B cell (primary cell): ENCODE measurements at regions of chr2 and their contacts with region 1.

Region 1: GRCh38 chr2:33583194-33583938 is 15.7 kb downstream of the FAM98A start:
- DNase-seq: peak; percentile 75
- ATAC-seq: peak; percentile 69
- H3K4me3 ChIP-seq: peak overlapping the region in 1 of 5 experiments; percentile 2
- H3K4me3 Mint-ChIP-seq: no peak overlapping the region
- H3K27ac ChIP-seq: peak overlapping the region; percentile 31 to 81
- H3K27ac Mint-ChIP-seq: peak overlapping the region; percentile 72
- H3K4me1 ChIP-seq: peaks cover 9 to 22% of the 10 kb centered on the region in 2 donors
- H3K4me1 Mint-ChIP-seq: peaks cover 17% of the 10 kb centered on the region
- H3K27me3 ChIP-seq: no peaks in the 10 kb centered on the region
- H3K27me3 Mint-ChIP-seq: no peaks in the 10 kb centered on the region
- CTCF ChIP-seq: peak; percentile 98

Region 2: GRCh38 chr2:32553829-32554432 is 1029.4 kb before region 1 on chr2:
- CTCF ChIA-PET with region 1: interaction called, 7 read pairs
- POLR2A ChIA-PET with region 1: no interaction called
- intact Hi-C with region 1: loop called (anchors 1 kb)
- DNase-seq: peak; percentile 68
- ATAC-seq: peak; percentile 68
- H3K4me3 ChIP-seq: no peak overlapping the region
- H3K4me3 Mint-ChIP-seq: no peak overlapping the region
- H3K27ac ChIP-seq: peak overlapping the region in 1 of 2 donors; percentile 57
- H3K27ac Mint-ChIP-seq: no peak overlapping the region
- H3K4me1 ChIP-seq: no peaks in the 10 kb centered on the region
- H3K4me1 Mint-ChIP-seq: peaks cover 4% of the 10 kb centered on the region
- H3K27me3 ChIP-seq: no peaks in the 10 kb centered on the region
- H3K27me3 Mint-ChIP-seq: no peaks in the 10 kb centered on the region
- CTCF ChIP-seq: peak; percentile 87

Region 3: DNA sequence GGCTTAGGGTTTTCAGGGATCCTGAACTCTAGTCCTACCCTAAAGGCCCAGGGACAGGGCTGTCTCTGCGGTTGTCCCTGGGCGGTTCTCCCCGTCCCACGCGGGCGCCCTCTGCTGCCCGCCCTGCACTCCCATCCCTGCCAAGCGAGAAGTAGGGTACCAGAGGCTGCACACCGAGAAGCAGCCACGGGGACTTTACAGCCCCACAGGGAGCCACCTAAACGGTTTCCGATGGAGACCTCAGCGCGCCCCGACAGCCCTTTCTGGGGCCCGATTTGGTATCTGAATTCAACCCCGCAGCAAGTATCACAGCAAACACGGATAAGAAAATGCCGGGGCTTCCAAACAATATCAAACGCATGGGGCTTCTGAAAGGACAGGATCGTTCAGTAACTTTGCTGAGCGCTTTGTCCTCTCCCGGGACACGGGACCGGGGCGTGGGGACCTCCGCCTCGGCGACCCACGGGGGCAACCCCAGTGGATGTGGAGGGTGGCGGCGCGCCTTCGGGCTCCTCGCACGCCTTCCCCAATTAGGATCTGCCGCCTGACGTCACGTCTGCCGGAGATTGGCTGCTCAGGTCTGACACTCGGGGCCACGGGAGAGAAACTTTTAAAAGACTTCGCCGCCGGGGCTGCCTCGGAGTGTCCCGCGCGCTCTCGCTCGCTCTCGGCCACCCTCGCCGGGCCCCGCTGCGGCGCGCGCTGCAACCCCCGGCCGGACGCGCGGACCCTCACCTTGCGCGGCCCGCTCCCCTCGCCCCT is 636.9 kb before region 1 on chr2 and contains the start of gene LTBP1:
- CTCF ChIA-PET with region 1: interaction called, 5 read pairs
- POLR2A ChIA-PET with region 1: no interaction called
- intact Hi-C with region 1: loop called (anchors 5 kb)
- DNase-seq: peak; percentile 68
- ATAC-seq: peak; percentile 75
- H3K4me3 ChIP-seq: peak within 1 kb of the TSS; percentile 42 to 72 (median 62)
- H3K4me3 Mint-ChIP-seq: peak within 1 kb of the TSS; percentile 86
- H3K27ac ChIP-seq: no peak within 1 kb of the TSS
- H3K27ac Mint-ChIP-seq: peak within 1 kb of the TSS; percentile 4
- H3K4me1 ChIP-seq: peaks cover 7 to 12% of the 10 kb centered on the region in 2 donors
- H3K4me1 Mint-ChIP-seq: peaks cover 15% of the 10 kb centered on the region
- H3K27me3 ChIP-seq: peaks cover 0 to 21% (median 13%) of the 10 kb centered on the region in 4 experiments
- H3K27me3 Mint-ChIP-seq: peaks cover 27% of the 10 kb centered on the region
- CTCF ChIP-seq: peak; percentile 67
- total RNA-seq, gene LTBP1: 0.17 and 0.69 TPM in 2 replicates

Region 4: DNA sequence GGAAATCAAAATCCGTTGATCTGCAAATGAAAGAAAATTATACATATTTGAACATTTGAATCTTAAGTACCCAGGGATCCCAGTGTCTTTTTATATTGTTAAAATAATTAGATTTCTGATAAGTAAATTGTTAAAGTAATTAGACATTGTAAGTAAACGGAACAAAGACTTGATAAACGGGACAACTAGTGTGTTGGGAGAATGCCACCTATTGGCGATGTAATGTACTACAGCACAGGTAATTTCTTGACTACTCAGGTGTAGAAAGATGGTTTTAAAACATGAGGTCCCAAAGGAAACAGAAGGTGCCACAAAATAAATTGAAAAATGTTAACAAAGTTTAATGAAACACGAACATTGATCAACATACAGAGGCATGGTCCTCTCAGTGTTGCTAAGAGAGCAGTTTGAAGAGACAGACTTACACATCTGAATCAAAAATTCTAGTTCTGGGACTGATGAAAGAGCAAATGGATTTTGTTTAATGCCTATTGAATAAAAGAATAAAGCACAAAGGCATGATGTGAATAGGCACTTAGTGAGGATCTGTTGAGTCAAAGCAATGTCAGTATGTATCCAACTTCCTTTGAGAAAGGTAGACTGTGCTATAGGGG is 210.3 kb before region 1 on chr2:
- CTCF ChIA-PET with region 1: interaction called, 8 read pairs
- POLR2A ChIA-PET with region 1: no interaction called
- intact Hi-C with region 1: loop called (anchors 1 kb)
- DNase-seq: peak; percentile 70
- ATAC-seq: peak; percentile 57
- H3K4me3 ChIP-seq: no peak overlapping the region
- H3K4me3 Mint-ChIP-seq: no peak overlapping the region
- H3K27ac ChIP-seq: no peak overlapping the region
- H3K27ac Mint-ChIP-seq: no peak overlapping the region
- H3K4me1 ChIP-seq: no peaks in the 10 kb centered on the region
- H3K4me1 Mint-ChIP-seq: no peaks in the 10 kb centered on the region
- H3K27me3 ChIP-seq: no peaks in the 10 kb centered on the region
- H3K27me3 Mint-ChIP-seq: no peaks in the 10 kb centered on the region
- CTCF ChIP-seq: peak; percentile 97

Region 5: GRCh38 chr2:33529771-33530351 is 53.5 kb before region 1 on chr2:
- CTCF ChIA-PET with region 1: interaction called, 5 read pairs
- POLR2A ChIA-PET with region 1: interaction called, 7 read pairs
- intact Hi-C with region 1: loop called (anchors 5 kb)
- DNase-seq: peak; percentile 36
- ATAC-seq: peak; percentile 37
- H3K4me3 ChIP-seq: peak overlapping the region in 1 of 5 experiments; percentile 56
- H3K4me3 Mint-ChIP-seq: peak overlapping the region; percentile 72
- H3K27ac ChIP-seq: peak overlapping the region; percentile 98 to 99
- H3K27ac Mint-ChIP-seq: peak overlapping the region; percentile 95
- H3K4me1 ChIP-seq: peaks cover 72 to 77% of the 10 kb centered on the region in 2 donors
- H3K4me1 Mint-ChIP-seq: peaks cover 79% of the 10 kb centered on the region
- H3K27me3 ChIP-seq: no peaks in the 10 kb centered on the region
- H3K27me3 Mint-ChIP-seq: no peaks in the 10 kb centered on the region
- CTCF ChIP-seq: no peak

Region 6: DNA sequence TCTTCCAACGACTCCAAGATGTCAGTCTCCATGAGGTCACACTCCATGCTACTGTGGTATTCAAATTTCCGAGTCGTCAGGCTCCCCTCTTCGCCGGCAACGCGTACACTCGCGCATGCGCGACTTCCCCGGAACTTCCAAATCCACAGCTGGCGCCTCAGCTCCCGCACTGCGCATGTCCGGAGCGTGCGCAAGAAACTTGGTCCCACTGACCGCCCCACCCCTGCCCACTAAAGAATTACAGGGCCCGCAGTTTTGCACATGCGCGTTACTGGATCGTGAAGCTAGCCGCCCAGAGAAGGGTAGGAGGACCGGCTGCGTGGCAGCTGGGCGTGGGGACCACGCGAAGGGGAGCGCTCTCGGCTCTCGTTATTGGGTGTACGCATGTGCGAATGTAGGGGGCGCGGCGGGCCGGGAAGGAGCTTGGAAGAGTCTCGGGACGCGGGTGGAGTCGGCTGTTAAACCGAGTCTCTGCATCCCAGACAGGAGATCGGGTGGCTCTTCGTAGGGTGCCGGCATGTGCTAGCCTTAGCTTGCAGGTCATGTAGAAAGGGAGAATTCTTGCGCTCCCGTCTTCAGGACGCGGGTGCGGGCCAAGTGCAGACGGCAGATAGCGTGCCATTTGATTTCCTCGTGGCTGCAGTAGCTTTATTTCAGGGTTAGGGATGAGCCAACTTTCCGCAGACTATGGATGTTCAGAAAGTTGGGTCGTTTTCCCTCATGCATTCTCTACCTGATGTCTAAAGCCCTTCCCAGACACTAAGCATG is 16.0 kb after region 1 on chr2 and contains the start of gene FAM98A:
- CTCF ChIA-PET with region 1: interaction called, 32 read pairs
- POLR2A ChIA-PET with region 1: interaction called, 4 read pairs
- intact Hi-C with region 1: loop called (anchors 1 kb)
- DNase-seq: peak; percentile 99
- ATAC-seq: peak; percentile 94
- H3K4me3 ChIP-seq: peak within 1 kb of the TSS; percentile 78 to 99 (median 90)
- H3K4me3 Mint-ChIP-seq: peak within 1 kb of the TSS; percentile 97
- H3K27ac ChIP-seq: peak within 1 kb of the TSS; percentile 88 to 90
- H3K27ac Mint-ChIP-seq: peak within 1 kb of the TSS; percentile 94
- H3K4me1 ChIP-seq: peaks cover 16% of the 10 kb centered on the region in 2 donors
- H3K4me1 Mint-ChIP-seq: peaks cover 31% of the 10 kb centered on the region
- H3K27me3 ChIP-seq: no peaks in the 10 kb centered on the region
- H3K27me3 Mint-ChIP-seq: no peaks in the 10 kb centered on the region
- CTCF ChIP-seq: no peak
- total RNA-seq, gene FAM98A: 29.4 and 32.1 TPM in 2 replicates